ENCODE measurements at regions of chr3 and their contacts with region 1.

Region 1: DNA sequence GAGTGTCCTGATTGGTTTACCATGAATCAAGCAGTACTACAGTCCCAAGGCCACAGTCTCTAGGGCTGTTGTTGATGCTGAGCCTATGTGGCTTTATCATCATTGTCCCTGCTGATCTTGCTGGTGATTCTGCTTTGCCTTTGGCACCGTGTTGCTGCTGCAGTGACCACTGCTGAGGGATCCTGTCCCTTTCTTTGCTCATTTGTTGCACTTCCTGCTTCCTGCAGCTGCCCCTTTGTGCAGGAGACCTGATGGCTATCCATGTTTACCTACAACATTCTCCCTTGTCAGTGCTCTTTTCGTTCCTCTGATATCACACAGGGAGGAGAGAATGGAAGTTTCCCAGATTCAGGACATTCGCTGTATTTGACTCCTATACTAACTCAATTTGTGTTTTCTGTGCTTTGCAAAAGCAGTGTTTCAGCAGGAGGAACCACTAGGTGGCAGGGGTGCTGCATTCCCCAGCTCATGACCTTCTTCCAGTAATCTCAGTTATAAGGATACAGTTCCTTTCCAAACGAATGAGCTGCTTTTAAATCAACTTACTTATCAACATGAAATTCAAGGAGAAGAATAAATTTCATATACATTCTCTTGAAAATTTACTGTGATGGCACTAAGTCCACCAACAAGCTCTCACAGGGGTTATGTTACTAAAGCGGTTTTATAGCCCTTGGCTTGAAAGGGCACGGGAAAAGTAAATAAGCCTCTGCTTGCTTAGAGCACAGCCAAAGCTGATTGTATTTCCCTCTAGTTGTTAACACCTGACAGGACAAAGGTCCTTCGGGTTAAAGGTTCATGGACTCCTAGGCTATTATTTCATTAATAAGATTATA is 9.7 kb upstream of the THUMPD3 start:
- DNase-seq: peak; percentile 64
- H3K4me3 ChIP-seq: no peak overlapping the region
- H3K27ac ChIP-seq: no peak overlapping the region
- H3K4me1 ChIP-seq: peaks cover 21% of the 10 kb centered on the region
- CTCF ChIP-seq: peak; percentile 98

Region 2: GRCh38 chr3:9224490-9224889 is 128.6 kb before region 1 on chr3:
- CTCF ChIA-PET with region 1: no interaction called
- POLR2A ChIA-PET with region 1: no interaction called
- intact Hi-C with region 1: no loop called
- DNase-seq: no peak
- H3K4me3 ChIP-seq: no peak overlapping the region
- H3K27ac ChIP-seq: no peak overlapping the region
- H3K4me1 ChIP-seq: no peaks in the 10 kb centered on the region
- CTCF ChIP-seq: no peak

Region 3: DNA sequence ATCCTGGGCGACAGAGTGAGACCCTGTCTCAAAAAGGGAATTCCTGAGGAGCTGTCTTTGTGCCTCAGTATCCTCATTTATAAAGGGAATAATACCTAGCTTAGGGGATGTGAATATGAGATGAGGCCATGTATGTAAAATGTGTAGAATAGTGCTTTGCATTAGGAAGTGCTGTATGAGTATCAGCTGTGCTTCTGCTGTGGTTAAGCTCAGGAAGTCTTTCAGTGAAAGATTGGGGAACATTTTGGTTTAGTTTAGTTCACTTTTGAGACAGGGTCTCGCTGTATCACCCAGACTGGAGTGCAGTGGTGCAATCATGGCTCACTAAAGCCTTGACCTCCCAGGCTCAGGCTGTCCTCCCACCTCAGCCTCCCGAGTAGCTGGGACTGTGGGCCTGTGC is 20.3 kb after region 1 on chr3:
- CTCF ChIA-PET with region 1: no interaction called
- POLR2A ChIA-PET with region 1: interaction called, 12 read pairs
- intact Hi-C with region 1: no loop called
- DNase-seq: no peak
- H3K4me3 ChIP-seq: no peak overlapping the region
- H3K27ac ChIP-seq: no peak overlapping the region
- H3K4me1 ChIP-seq: no peaks in the 10 kb centered on the region
- CTCF ChIP-seq: no peak

Region 4: GRCh38 chr3:9422712-9423424 is 69.7 kb after region 1 on chr3:
- CTCF ChIA-PET with region 1: no interaction called
- POLR2A ChIA-PET with region 1: no interaction called
- intact Hi-C with region 1: loop called (anchors 5 kb)
- DNase-seq: no peak
- H3K4me3 ChIP-seq: no peak overlapping the region
- H3K27ac ChIP-seq: peak overlapping the region; percentile 45
- H3K4me1 ChIP-seq: peaks cover 5% of the 10 kb centered on the region
- CTCF ChIP-seq: peak; percentile 61

Region 5: DNA sequence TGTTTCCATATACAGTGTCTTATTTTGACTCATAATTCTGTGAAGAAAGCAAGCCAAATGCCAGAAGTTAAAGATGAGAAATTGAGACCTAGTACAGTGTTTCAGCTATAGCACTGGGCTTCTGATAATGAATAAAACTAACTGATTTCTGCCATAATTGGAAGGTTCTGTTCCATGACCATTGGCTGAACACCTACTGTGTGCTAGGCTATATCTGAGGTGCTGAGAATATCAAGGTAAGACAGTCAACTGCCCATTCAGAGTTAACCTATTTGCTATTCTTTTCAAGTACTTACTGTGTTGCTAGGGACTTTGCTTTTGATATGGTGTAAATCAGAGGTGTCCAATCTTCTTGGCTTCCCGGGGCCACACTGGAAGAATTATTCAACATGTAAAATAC is 127.1 kb after region 1 on chr3:
- CTCF ChIA-PET with region 1: no interaction called
- POLR2A ChIA-PET with region 1: no interaction called
- intact Hi-C with region 1: loop called (anchors 5 kb)
- DNase-seq: no peak
- H3K4me3 ChIP-seq: no peak overlapping the region
- H3K27ac ChIP-seq: no peak overlapping the region
- H3K4me1 ChIP-seq: no peaks in the 10 kb centered on the region
- CTCF ChIP-seq: no peak

Region 6: GRCh38 chr3:9503283-9503682 is 150.1 kb after region 1 on chr3:
- CTCF ChIA-PET with region 1: interaction called, 4 read pairs
- POLR2A ChIA-PET with region 1: no interaction called
- intact Hi-C with region 1: loop called (anchors 2 kb)
- DNase-seq: peak; percentile 83
- H3K4me3 ChIP-seq: no peak overlapping the region
- H3K27ac ChIP-seq: no peak overlapping the region
- H3K4me1 ChIP-seq: peaks cover 6% of the 10 kb centered on the region
- CTCF ChIP-seq: peak; percentile 96

Region 7: GRCh38 chr3:9731206-9732079 is 378.3 kb after region 1 on chr3 and contains the start of gene BRPF1:
- CTCF ChIA-PET with region 1: no interaction called
- POLR2A ChIA-PET with region 1: no interaction called
- intact Hi-C with region 1: loop called (anchors 1 kb)
- DNase-seq: peak; percentile 98
- H3K4me3 ChIP-seq: peak within 1 kb of the TSS; percentile 96
- H3K27ac ChIP-seq: peak within 1 kb of the TSS; percentile 60
- H3K4me1 ChIP-seq: peaks cover 28% of the 10 kb centered on the region
- CTCF ChIP-seq: no peak
- total RNA-seq, gene BRPF1: 29.2 and 31.9 TPM in 2 replicates

Region 8: GRCh38 chr3:9897408-9898372 is 544.6 kb after region 1 on chr3:
- CTCF ChIA-PET with region 1: no interaction called
- POLR2A ChIA-PET with region 1: no interaction called
- intact Hi-C with region 1: no loop called
- DNase-seq: no peak
- H3K4me3 ChIP-seq: no peak overlapping the region
- H3K27ac ChIP-seq: no peak overlapping the region
- H3K4me1 ChIP-seq: peaks cover 7% of the 10 kb centered on the region
- CTCF ChIP-seq: no peak